Astrocyte of the cerebellum (primary cell): ENCODE measurements at regions of chr5 and their contacts with region 1.

Region 1: GRCh38 chr5:142472300-142472951 is 147.6 kb upstream of the SPRY4 start:
- DNase-seq: no peak
- H3K4me3 ChIP-seq: no peak overlapping the region
- CTCF ChIP-seq: no peak

Region 2: DNA sequence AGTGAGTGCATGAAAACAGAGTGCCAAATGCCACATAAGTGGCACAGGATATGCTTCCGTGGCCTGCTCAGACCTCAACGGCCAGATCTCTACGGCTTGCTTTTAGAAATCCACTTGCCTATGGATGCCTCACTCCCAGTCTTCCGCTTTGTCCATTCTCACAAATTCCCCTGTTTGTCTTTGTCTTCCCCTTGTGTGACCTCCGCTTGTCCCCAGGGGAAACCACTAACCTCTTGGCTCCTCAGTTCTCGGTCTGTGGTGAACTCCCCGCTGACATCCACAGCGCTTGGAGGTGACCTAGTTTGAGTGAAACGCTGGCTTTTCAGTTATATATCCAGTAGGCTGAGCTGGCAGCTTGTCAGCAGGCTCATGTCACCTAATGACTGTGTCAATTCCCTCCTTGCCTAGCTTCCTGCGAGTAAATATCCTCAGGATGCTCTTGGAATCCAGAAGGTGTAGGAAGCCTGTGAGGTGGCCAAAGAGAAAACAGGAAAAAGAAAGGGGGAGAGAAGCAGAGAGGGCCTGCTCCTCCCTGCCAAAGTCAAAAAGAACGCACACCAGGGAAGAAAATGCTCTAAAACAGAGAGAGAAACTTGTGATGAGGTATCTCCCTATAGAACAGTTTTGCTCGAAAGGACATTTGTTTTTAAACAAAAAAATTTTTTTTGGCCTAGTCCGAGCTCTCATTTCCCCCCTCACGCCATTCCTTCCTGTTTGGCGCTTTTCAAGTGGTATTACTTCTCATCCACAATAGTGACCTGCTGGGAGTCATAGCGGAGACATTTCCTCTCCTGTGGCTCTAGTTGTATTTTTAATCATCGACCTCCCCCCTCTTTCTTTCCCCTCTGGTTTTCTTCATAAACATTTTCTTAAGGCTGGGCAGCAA is 46.1 kb before region 1 on chr5:
- in situ Hi-C with region 1: loop called (anchors 5 kb)
- DNase-seq: peak; percentile 84
- H3K4me3 ChIP-seq: no peak overlapping the region
- CTCF ChIP-seq: no peak